ENCODE measurements at regions of chr15 and their contacts with region 1.

Region 1: GRCh38 chr15:30072630-30073029 is 10.1 kb upstream of the GOLGA8J start:
- DNase-seq: no peak
- H3K4me3 ChIP-seq: no peak overlapping the region
- H3K27ac ChIP-seq: no peak overlapping the region
- H3K4me1 ChIP-seq: peaks cover 7% of the 10 kb centered on the region
- H3K27me3 ChIP-seq: peaks cover 2% of the 10 kb centered on the region
- CTCF ChIP-seq: no peak

Region 2: DNA sequence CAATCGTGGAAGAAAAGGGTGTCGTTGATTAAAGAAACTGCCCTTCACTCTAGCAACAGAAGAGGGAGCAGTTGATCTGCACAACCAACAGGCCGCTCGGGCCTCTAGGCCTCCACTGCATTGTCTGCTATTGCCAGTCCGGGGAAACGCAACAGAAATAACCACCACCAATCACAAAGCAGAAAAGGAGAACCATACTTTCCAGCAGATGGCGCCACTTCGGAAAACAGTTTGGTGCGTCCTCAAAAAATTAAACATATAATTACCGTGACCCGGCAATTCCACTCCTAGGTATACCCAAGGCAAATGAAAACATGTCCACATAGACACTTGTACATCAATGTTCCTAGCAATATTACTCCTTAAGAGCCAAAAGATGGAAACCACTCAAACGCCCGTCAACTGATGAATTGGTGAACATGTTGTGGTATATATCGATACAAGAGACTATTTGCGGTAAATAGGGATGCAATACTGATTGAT is 404.5 kb before region 1 on chr15:
- CTCF ChIA-PET with region 1: no interaction called
- dilution Hi-C with region 1: no loop called
- in situ Hi-C with region 1: no loop called
- intact Hi-C with region 1: loop called (anchors 1 kb)
- DNase-seq: peak; percentile 62
- H3K4me3 ChIP-seq: no peak overlapping the region
- H3K27ac ChIP-seq: no peak overlapping the region
- H3K4me1 ChIP-seq: peaks cover 22% of the 10 kb centered on the region
- H3K27me3 ChIP-seq: no peaks in the 10 kb centered on the region
- CTCF ChIP-seq: peak; percentile 45 to 54

Region 3: DNA sequence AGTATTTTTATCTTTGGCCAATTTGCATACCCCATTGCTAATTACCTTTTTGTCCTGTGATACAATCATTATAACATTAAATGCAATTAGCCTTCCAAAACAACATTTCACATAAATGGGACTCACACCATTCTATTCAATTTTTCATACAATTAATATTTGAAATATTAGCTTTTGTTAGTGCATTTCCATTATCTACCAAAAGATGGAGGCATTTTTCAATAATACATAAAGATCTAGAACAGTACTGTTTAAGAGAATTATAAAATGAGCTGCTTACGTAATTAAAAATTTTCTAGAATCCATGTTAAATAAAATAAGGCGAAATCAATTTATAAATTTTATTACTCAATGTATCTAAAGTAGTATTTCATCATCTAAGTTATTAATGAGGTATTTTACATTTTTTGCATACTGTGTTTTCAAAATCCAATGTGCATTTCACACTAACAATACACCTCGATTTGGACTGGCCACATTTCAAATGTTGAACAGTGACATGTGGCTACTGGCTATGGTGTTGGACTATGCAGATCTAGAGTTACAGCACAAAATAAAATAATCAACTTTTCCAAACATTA is 324.7 kb before region 1 on chr15:
- CTCF ChIA-PET with region 1: interaction called, 15 read pairs
- dilution Hi-C with region 1: no loop called
- in situ Hi-C with region 1: no loop called
- intact Hi-C with region 1: no loop called
- DNase-seq: no peak
- H3K4me3 ChIP-seq: no peak overlapping the region
- H3K27ac ChIP-seq: no peak overlapping the region
- H3K4me1 ChIP-seq: no peaks in the 10 kb centered on the region
- H3K27me3 ChIP-seq: no peaks in the 10 kb centered on the region
- CTCF ChIP-seq: peak; percentile 37 to 42

Region 4: GRCh38 chr15:29815000-29815710 is 257.5 kb before region 1 on chr15:
- CTCF ChIA-PET with region 1: no interaction called
- dilution Hi-C with region 1: no loop called
- in situ Hi-C with region 1: no loop called
- intact Hi-C with region 1: loop called (anchors 10 kb)
- DNase-seq: peak; percentile 42
- H3K4me3 ChIP-seq: no peak overlapping the region
- H3K27ac ChIP-seq: no peak overlapping the region
- H3K4me1 ChIP-seq: peaks cover 34% of the 10 kb centered on the region
- H3K27me3 ChIP-seq: no peaks in the 10 kb centered on the region
- CTCF ChIP-seq: no peak

Region 5: GRCh38 chr15:29859973-29860715 is 212.5 kb before region 1 on chr15:
- CTCF ChIA-PET with region 1: no interaction called
- dilution Hi-C with region 1: no loop called
- in situ Hi-C with region 1: no loop called
- intact Hi-C with region 1: no loop called
- DNase-seq: peak; percentile 70
- H3K4me3 ChIP-seq: no peak overlapping the region
- H3K27ac ChIP-seq: peak overlapping the region; percentile 44
- H3K4me1 ChIP-seq: peaks cover 23% of the 10 kb centered on the region
- H3K27me3 ChIP-seq: no peaks in the 10 kb centered on the region
- CTCF ChIP-seq: no peak

Region 6: GRCh38 chr15:30043211-30043655 is 29.4 kb before region 1 on chr15:
- CTCF ChIA-PET with region 1: no interaction called
- dilution Hi-C with region 1: no loop called
- in situ Hi-C with region 1: no loop called
- intact Hi-C with region 1: loop called (anchors 1 kb)
- DNase-seq: no peak
- H3K4me3 ChIP-seq: no peak overlapping the region
- H3K27ac ChIP-seq: no peak overlapping the region
- H3K4me1 ChIP-seq: no peaks in the 10 kb centered on the region
- H3K27me3 ChIP-seq: no peaks in the 10 kb centered on the region
- CTCF ChIP-seq: peak; percentile 23 to 45